Dorsolateral prefrontal cortex (tissue), 120 donors: ENCODE measurements at regions of chr9 and their contacts with region 1.

Region 1: GRCh38 chr9:100492952-100493351 is 20.0 kb downstream of the TMEFF1 start:
- DNase-seq: no peak
- H3K4me3 ChIP-seq: peak overlapping the region in 2 of 59 donors; percentile 1
- H3K27ac ChIP-seq: peak overlapping the region in 47 of 59 donors; percentile 3 to 88 (median 48)
- H3K27me3 ChIP-seq: no peaks in the 10 kb centered on the region
- CTCF ChIP-seq: peak in 22 of 56 donors; percentile 10 to 51 (median 24)

Region 2: DNA sequence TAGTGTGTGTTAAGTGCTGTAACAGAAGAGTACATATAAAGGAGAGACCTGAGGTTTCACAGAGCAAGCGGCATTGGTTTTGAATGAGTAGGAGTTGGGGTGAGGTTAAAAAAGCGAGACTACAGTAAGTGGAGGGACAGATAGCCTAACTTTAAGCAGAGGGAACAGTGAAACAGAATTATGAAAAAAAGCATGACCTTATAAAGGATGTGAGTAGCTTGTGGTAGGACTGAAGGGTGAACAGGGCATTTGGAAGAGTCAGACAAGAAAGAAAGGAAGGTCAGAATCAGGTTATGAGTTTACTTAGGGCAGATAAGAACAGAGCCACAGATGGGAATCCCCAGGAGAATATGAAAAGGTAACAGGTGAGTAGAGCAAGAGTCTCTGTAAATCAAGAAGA is 43.5 kb before region 1 on chr9:
- intact Hi-C with region 1: loop called in 1 of 2 experiments (anchors 5 kb)
- DNase-seq: no peak
- H3K4me3 ChIP-seq: no peak overlapping the region
- H3K27ac ChIP-seq: no peak overlapping the region
- H3K27me3 ChIP-seq: no peaks in the 10 kb centered on the region
- CTCF ChIP-seq: no peak

Region 3: DNA sequence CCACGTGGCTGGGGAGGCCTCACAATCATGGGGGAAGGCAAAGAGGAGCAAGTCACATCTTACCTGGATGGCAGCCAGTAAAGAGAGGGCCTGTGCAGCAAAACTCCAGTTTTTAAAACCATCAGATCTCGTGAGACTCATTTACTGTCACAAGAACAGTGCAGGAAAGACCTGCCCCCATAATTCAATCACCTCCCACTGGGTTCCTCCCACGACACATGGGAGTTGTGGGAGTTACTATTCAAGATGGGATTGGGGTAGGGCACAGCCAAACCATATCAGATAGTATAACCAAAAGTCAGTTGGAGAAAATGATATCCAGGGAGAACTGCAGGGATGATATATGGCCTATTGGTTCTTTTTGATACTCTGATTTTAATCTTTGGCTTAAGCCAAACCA is 74.9 kb after region 1 on chr9:
- intact Hi-C with region 1: no loop called
- DNase-seq: no peak
- H3K4me3 ChIP-seq: no peak overlapping the region
- H3K27ac ChIP-seq: peak overlapping the region in 1 of 59 donors; percentile 45
- H3K27me3 ChIP-seq: no peaks in the 10 kb centered on the region
- CTCF ChIP-seq: no peak